HEK293 (cell line): ENCODE measurements at regions of chr2 and their contacts with region 1.

Region 1: GRCh38 chr2:235305492-235306077 is 188.3 kb upstream of the AGAP1 start:
- H3K4me3 ChIP-seq: no peak overlapping the region
- H3K27ac ChIP-seq: no peak overlapping the region
- H3K4me1 ChIP-seq: no peaks in the 10 kb centered on the region
- CTCF ChIP-seq: no peak

Region 2: GRCh38 chr2:235287375-235287733 is 18.2 kb before region 1 on chr2:
- CTCF ChIA-PET with region 1: no interaction called
- POLR2A ChIA-PET with region 1: no interaction called
- H3K4me3 ChIP-seq: no peak overlapping the region
- H3K27ac ChIP-seq: no peak overlapping the region
- H3K4me1 ChIP-seq: no peaks in the 10 kb centered on the region
- CTCF ChIP-seq: no peak

Region 3: GRCh38 chr2:235330775-235331451 is 25.3 kb after region 1 on chr2:
- CTCF ChIA-PET with region 1: no interaction called
- POLR2A ChIA-PET with region 1: no interaction called
- H3K4me3 ChIP-seq: no peak overlapping the region
- H3K27ac ChIP-seq: no peak overlapping the region
- H3K4me1 ChIP-seq: peaks cover 4% of the 10 kb centered on the region
- CTCF ChIP-seq: no peak

Region 4: DNA sequence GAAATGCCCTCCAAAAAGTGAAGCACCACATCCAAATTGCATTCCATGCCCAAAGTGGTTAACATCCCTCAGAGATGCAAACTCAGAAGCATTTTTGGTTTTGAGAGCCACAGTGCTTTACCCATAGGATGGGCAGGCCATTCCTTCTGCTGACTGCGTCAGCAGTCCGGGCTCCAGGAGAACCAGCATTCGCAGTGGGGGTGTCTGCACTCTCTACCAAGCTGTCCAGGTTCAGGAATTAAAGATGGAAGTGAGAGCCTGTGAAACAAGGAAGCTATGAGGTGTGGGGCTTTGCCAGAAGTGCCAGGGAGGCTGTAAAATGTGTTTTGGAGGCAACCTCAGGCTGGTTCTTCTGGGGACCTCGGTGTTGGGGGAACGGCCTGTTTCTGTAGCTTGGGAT is 394.0 kb after region 1 on chr2:
- CTCF ChIA-PET with region 1: no interaction called
- POLR2A ChIA-PET with region 1: interaction called, 17 read pairs
- H3K4me3 ChIP-seq: no peak overlapping the region
- H3K27ac ChIP-seq: no peak overlapping the region
- H3K4me1 ChIP-seq: peaks cover 9% of the 10 kb centered on the region; the same call in 1 of the 2 replicates
- CTCF ChIP-seq: no peak